ENCODE measurements at regions of chr17 and their contacts with region 1.

Region 1: DNA sequence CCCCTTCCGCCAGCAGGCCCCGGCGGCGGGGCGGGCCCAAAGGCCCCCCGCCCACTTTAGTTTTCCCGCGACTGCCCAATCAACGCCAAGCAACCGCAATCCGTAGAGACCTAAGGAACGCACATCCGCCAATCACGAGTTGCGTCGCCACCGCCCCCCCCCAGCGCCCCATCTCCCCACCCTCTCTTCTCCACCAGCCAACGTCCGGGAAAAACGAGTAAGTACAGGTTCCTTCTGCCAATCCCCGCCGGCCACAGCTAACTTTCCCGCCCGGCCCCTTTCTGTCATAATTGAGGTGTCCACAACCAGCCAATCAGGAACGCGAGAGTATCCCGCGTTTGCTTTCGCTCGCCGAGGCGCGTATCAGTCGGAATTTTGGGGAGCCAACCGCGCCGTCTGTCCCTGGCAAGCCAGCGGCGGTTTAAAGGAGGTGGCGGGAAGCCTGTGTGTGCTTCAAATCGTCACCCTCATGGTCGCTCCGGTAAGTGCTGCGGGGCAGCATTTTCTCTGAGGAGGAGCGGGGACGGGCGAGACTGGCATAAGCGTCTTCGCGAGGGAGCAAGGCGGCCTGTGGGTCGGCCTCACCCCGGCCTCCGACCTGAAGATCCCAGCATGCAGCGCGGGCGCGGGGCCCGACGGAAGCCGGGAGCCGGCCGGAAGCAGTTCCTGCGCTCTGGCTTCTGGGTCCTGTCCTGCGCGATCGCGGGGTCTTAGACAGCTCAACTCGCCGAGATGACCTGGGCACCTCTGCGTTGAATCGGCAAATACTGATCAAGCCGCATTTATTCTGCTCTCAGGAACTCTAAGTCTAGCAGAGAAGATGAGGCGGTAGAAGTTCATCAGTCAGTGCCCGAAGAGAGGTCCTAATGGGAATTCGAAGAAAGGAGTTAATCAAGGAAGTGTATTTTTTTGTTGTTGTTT is at the start of gene MIS12:
- DNase-seq: peak; percentile 98 to 99
- ATAC-seq: peak; percentile 94 to 97 (median 94)
- H3K4me3 ChIP-seq: peak within 1 kb of the TSS; percentile 85
- H3K27ac ChIP-seq: peak within 1 kb of the TSS; percentile 98
- H3K4me1 ChIP-seq: peaks cover 18% of the 10 kb centered on the region
- H3K27me3 ChIP-seq: no peaks in the 10 kb centered on the region
- CTCF ChIP-seq: no peak
- total RNA-seq, gene MIS12: 13.6 to 21.4 (median 17.5) TPM

Region 2: DNA sequence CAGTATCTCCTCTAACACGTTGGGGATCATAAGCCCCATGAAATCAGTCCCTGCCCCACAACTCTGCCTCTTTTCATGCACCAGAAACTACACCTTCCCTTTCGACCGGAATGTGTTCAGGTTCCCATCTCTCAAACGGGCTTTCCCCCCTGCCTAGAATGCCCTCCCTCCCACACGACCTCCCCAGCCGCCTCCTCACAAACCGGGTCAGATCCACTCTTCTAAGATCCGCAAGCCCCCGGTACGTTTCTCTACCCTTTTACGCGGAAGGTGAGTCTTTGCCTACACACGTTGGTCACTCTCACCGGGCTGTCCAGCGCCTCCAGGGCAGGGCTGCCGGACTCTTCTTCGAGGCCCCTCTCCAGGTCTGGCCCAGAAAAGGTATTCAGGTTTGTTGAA is 18.4 kb before region 1 on chr17:
- intact Hi-C with region 1: loop called in 1 of 2 experiments (anchors 2 kb)
- DNase-seq: no peak
- ATAC-seq: peak; percentile 8 to 22 (median 16)
- H3K4me3 ChIP-seq: peak overlapping the region; percentile 95
- H3K27ac ChIP-seq: no peak overlapping the region
- H3K4me1 ChIP-seq: peaks cover 7% of the 10 kb centered on the region
- H3K27me3 ChIP-seq: no peaks in the 10 kb centered on the region
- CTCF ChIP-seq: no peak

Region 3: GRCh38 chr17:5526821-5527598 is 40.5 kb after region 1 on chr17:
- intact Hi-C with region 1: loop called (anchors 2 to 5 kb)
- DNase-seq: peak; percentile 80 to 92
- ATAC-seq: peak; percentile 99 to 100 (median 99)
- H3K4me3 ChIP-seq: peak overlapping the region; percentile 6
- H3K27ac ChIP-seq: peak overlapping the region; percentile 96
- H3K4me1 ChIP-seq: peaks cover 21% of the 10 kb centered on the region
- H3K27me3 ChIP-seq: no peaks in the 10 kb centered on the region
- CTCF ChIP-seq: no peak

Measured in psoas muscle (tissue), 8 donors.